Panc1 (cell line): ENCODE measurements at regions of chr1 and their contacts with region 1.

Region 1: DNA sequence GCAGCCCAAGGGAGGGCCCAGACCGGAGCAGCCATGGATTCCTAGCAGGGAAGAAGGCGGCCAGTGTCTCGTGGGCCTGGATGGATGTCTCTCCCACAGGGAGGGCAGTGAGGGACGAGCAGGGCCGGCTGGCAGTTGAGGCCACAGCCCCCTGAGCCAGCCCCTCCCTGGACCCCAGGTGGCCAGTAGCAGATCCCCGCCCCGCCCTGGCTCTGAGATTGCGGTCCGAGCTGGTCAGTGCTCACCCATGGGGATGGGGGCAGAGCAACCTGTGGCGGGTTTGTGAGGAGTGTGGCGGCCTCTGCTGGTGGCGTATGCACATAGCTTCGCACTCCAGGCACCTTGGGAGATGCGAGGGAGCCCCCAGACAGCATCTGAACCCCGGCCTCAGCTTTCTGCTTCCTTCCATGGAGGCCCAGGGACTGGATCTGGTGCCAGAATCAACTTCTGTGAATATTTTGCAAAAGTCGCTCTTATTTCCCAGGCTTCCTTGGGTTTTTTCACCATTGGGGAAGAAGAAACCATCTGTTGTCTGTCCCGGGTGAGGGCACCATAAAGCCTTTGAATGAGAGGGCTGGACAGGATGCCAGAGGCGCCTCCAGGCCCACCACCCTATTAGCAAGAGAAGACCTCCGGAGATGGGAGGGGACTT is 8.4 kb upstream of the KCNN3 start:
- DNase-seq: peak; percentile 42
- ATAC-seq: peak; percentile 96
- H3K4me3 ChIP-seq: no peak overlapping the region
- H3K27ac ChIP-seq: no peak overlapping the region
- H3K4me1 ChIP-seq: peaks cover 7% of the 10 kb centered on the region; the same call in 1 of the 2 replicates
- H3K27me3 ChIP-seq: peaks cover 3% of the 10 kb centered on the region; the same call in 1 of the 2 replicates
- CTCF ChIP-seq: peak; percentile 93

Region 2: GRCh38 chr1:154669464-154670282 is 208.8 kb before region 1 on chr1:
- CTCF ChIA-PET with region 1: interaction called, 14 read pairs
- POLR2A ChIA-PET with region 1: no interaction called
- in situ Hi-C with region 1: no loop called
- intact Hi-C with region 1: loop called (anchors 1 kb)
- DNase-seq: peak; percentile 75
- ATAC-seq: peak; percentile 100
- H3K4me3 ChIP-seq: no peak overlapping the region
- H3K27ac ChIP-seq: no peak overlapping the region
- H3K4me1 ChIP-seq: no peaks in the 10 kb centered on the region
- H3K27me3 ChIP-seq: no peaks in the 10 kb centered on the region
- CTCF ChIP-seq: peak; percentile 91

Region 3: GRCh38 chr1:154730259-154730658 is 148.2 kb before region 1 on chr1:
- CTCF ChIA-PET with region 1: no interaction called
- POLR2A ChIA-PET with region 1: no interaction called
- in situ Hi-C with region 1: no loop called
- intact Hi-C with region 1: no loop called
- DNase-seq: no peak
- ATAC-seq: no peak
- H3K4me3 ChIP-seq: no peak overlapping the region
- H3K27ac ChIP-seq: no peak overlapping the region
- H3K4me1 ChIP-seq: no peaks in the 10 kb centered on the region
- H3K27me3 ChIP-seq: peaks cover 3% of the 10 kb centered on the region; the same call in 1 of the 2 replicates
- CTCF ChIP-seq: no peak

Region 4: GRCh38 chr1:154765970-154766369 is 112.5 kb before region 1 on chr1:
- CTCF ChIA-PET with region 1: interaction called, 7 read pairs
- POLR2A ChIA-PET with region 1: no interaction called
- in situ Hi-C with region 1: no loop called
- intact Hi-C with region 1: loop called (anchors 5 kb)
- DNase-seq: no peak
- ATAC-seq: peak; percentile 92
- H3K4me3 ChIP-seq: no peak overlapping the region
- H3K27ac ChIP-seq: no peak overlapping the region
- H3K4me1 ChIP-seq: no peaks in the 10 kb centered on the region
- H3K27me3 ChIP-seq: peaks cover 37% of the 10 kb centered on the region
- CTCF ChIP-seq: peak; percentile 74

Region 5: GRCh38 chr1:154936555-154937084 is 58.1 kb after region 1 on chr1 and contains the start of gene PMVK:
- CTCF ChIA-PET with region 1: no interaction called
- POLR2A ChIA-PET with region 1: interaction called, 4 read pairs
- in situ Hi-C with region 1: no loop called
- intact Hi-C with region 1: loop called (anchors 2 kb)
- DNase-seq: peak; percentile 85
- ATAC-seq: peak; percentile 95
- H3K4me3 ChIP-seq: peak within 1 kb of the TSS; percentile 68 to 94
- H3K27ac ChIP-seq: peak within 1 kb of the TSS; percentile 97
- H3K4me1 ChIP-seq: peaks cover 11% of the 10 kb centered on the region
- H3K27me3 ChIP-seq: no peaks in the 10 kb centered on the region
- CTCF ChIP-seq: no peak; the same call in 1 of the 2 replicates
- total RNA-seq, gene PMVK: 42.2 TPM